Activated naive CD4-positive, alpha-beta T cell treated with anti-CD3 and anti-CD28 coated beads for 36 hours (primary cell): ENCODE measurements at regions of chr17 and their contacts with region 1.

Region 1: GRCh38 chr17:50213026-50214022 is 11.9 kb upstream of the COL1A1 start:
- DNase-seq: peak; percentile 89
- H3K4me3 Mint-ChIP-seq: no peak overlapping the region
- H3K27ac Mint-ChIP-seq: peak overlapping the region; percentile 17
- H3K4me1 Mint-ChIP-seq: peaks cover 29% of the 10 kb centered on the region
- H3K27me3 Mint-ChIP-seq: peaks cover 2% of the 10 kb centered on the region

Region 2: DNA sequence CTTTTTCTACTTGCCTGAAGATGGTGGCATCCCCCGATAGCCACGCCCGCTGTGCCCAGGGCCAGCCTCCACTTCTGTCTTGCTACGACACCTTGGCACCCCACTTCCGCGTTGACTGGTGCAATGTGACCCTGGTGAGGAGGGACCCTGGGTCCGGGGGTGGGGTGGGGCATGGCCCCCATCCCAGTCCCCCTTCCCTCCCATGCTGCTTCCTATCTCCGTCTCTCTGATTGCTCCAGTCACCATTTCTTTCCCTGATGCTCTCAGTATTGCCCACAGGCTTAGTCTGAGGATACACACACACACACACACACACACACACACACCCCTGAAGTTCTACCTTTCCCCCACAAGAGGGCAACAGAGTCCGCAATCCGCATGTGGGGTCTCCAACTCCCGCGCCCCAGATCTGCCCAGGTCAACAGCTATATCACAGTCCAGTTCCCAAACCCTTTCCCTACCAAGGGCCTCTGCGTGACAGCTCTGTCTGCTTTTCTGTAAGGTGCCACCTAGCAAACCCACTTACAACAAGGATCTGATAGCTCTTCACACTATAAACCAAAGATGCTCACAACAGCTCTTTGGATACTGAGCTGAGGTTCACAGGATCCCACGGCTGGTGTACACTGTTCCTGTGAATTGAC is 44.1 kb before region 1 on chr17:
- CTCF ChIA-PET with region 1: interaction called, 11 read pairs
- intact Hi-C with region 1: no loop called
- DNase-seq: peak; percentile 57
- H3K4me3 Mint-ChIP-seq: peak overlapping the region; percentile 46
- H3K27ac Mint-ChIP-seq: no peak overlapping the region
- H3K4me1 Mint-ChIP-seq: peaks cover 10% of the 10 kb centered on the region
- H3K27me3 Mint-ChIP-seq: no peaks in the 10 kb centered on the region

Region 3: GRCh38 chr17:50312308-50312707 is 99.0 kb after region 1 on chr17:
- CTCF ChIA-PET with region 1: no interaction called
- intact Hi-C with region 1: loop called (anchors 1 kb)
- DNase-seq: no peak
- H3K4me3 Mint-ChIP-seq: no peak overlapping the region
- H3K27ac Mint-ChIP-seq: no peak overlapping the region
- H3K4me1 Mint-ChIP-seq: peaks cover 30% of the 10 kb centered on the region
- H3K27me3 Mint-ChIP-seq: peaks cover 10% of the 10 kb centered on the region